ENCODE measurements at regions of chr4 and their contacts with region 1.

Region 1: DNA sequence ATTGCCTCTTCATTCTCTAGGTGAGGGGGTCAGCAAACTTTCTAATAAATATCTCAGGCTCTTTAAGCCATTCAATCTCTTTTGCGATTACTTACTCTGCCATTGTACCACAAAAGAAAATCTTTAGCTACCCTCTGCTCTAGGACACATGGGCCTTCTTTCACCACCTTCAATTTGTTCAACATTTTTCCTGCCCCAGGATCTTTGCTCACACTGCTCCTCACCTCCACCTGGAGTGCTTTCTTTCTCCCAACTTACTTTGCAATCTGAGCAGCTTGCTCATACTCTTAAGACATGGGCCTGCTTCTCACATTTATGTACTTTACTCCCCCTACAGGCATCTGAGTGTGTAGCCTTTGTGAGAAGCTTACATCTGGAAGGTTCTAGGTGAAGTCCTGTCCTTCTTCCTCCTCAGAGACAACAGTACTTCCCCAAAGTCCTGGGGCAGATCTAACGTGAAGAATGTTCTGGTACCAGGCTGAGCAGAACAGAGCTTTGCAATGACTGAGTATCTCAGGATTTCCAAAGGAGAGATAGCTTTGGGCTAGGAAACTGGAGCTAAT is 55.0 kb upstream of the PRDM5 start:
- DNase-seq: peak; percentile 7
- H3K4me3 ChIP-seq: no peak overlapping the region
- H3K27me3 ChIP-seq: no peaks in the 10 kb centered on the region; the same call in 1 of the 2 replicates
- CTCF ChIP-seq: peak; percentile 79

Region 2: GRCh38 chr4:120718979-120719566 is 258.4 kb before region 1 on chr4:
- CTCF ChIA-PET with region 1: interaction called, 22 read pairs
- POLR2A ChIA-PET with region 1: no interaction called
- DNase-seq: no peak
- H3K4me3 ChIP-seq: no peak overlapping the region
- H3K27me3 ChIP-seq: no peaks in the 10 kb centered on the region
- CTCF ChIP-seq: peak; percentile 80

Region 3: GRCh38 chr4:120724656-120725055 is 252.9 kb before region 1 on chr4:
- CTCF ChIA-PET with region 1: interaction called, 22 read pairs
- POLR2A ChIA-PET with region 1: no interaction called
- DNase-seq: no peak
- H3K4me3 ChIP-seq: no peak overlapping the region
- H3K27me3 ChIP-seq: no peaks in the 10 kb centered on the region
- CTCF ChIP-seq: no peak

Region 4: GRCh38 chr4:121164291-121164690 is 186.8 kb after region 1 on chr4 and contains the start of gene TNIP3:
- CTCF ChIA-PET with region 1: no interaction called
- POLR2A ChIA-PET with region 1: no interaction called
- DNase-seq: no peak
- H3K4me3 ChIP-seq: no peak within 1 kb of the TSS
- H3K27me3 ChIP-seq: no peaks in the 10 kb centered on the region
- CTCF ChIP-seq: no peak
- polyA plus RNA-seq, gene TNIP3: 0.20 and 0.33 TPM in 2 replicates

Region 5: GRCh38 chr4:121252224-121252806 is 274.8 kb after region 1 on chr4:
- CTCF ChIA-PET with region 1: no interaction called
- POLR2A ChIA-PET with region 1: no interaction called
- DNase-seq: no peak
- H3K4me3 ChIP-seq: no peak overlapping the region
- H3K27me3 ChIP-seq: no peaks in the 10 kb centered on the region
- CTCF ChIP-seq: peak; percentile 81

Measured in BJ (cell line).